OCI-LY7 (cell line): ENCODE measurements at regions of chr3 and their contacts with region 1.

Region 1: DNA sequence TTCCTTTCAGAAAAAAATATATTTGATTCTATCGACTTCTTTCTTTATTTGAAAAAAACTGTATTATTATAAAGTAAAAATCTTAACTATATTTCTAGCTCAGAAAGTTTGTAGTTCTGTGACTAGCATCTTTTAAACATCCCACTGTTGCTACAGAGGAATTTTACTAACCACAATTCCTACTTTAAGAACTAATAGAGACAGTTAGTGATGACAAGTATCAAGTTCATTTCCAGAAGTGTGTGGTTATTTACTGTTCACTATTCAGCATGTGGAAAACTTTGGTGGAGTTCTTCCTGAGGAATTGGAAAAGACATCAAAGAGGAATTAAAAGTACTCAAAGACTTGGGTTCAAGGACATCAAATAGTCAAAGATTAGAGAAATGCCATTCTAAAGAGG is 524.1 kb upstream of the CBLB start:
- DNase-seq: no peak
- H3K4me3 ChIP-seq: no peak overlapping the region
- H3K27ac ChIP-seq: no peak overlapping the region
- H3K4me1 ChIP-seq: peaks cover 10% of the 10 kb centered on the region
- CTCF ChIP-seq: no peak

Region 2: DNA sequence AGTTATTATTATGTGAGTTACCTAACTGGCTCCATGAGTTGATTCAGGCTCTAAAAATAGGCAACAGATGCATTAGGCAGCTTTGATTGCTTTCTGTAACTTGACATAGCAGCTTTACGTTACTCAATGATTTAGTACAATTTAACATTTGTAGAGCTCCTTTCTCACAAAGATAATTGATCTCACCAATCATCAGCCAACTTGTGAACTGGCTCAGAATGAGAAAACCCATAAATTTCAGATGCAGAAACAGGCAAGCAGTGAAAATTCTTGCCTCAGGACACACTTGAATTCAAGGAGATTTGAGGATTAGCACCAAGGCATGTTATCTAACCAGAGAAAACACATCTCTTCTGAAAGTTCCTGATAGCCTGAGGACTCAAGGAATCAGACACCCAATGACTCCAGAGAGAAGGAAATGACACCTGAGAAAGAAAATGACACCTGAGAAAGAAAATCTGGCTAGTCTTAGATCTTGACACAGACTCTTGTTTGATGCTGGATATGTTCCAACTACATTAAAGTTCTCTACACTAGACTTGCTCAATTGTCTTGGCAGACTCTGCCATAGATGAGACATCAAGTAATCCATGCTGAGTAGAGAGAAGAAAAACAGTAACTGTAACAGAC is 209.0 kb before region 1 on chr3:
- CTCF ChIA-PET with region 1: no interaction called
- POLR2A ChIA-PET with region 1: no interaction called
- intact Hi-C with region 1: no loop called
- DNase-seq: no peak
- H3K4me3 ChIP-seq: no peak overlapping the region
- H3K27ac ChIP-seq: no peak overlapping the region
- H3K4me1 ChIP-seq: no peaks in the 10 kb centered on the region
- CTCF ChIP-seq: no peak

Region 3: GRCh38 chr3:106379311-106379710 is 13.6 kb before region 1 on chr3:
- CTCF ChIA-PET with region 1: no interaction called
- POLR2A ChIA-PET with region 1: interaction called, 15 read pairs
- intact Hi-C with region 1: no loop called
- DNase-seq: no peak
- H3K4me3 ChIP-seq: no peak overlapping the region
- H3K27ac ChIP-seq: no peak overlapping the region
- H3K4me1 ChIP-seq: peaks cover 4% of the 10 kb centered on the region
- CTCF ChIP-seq: no peak